ENCODE measurements at regions of chr1 and their contacts with region 1.

Region 1: GRCh38 chr1:117758444-117759316 is 152.8 kb downstream of the TENT5C start:
- DNase-seq: peak; percentile 78
- ATAC-seq: peak; percentile 89
- H3K4me3 Mint-ChIP-seq: peak overlapping the region; percentile 62
- H3K27ac Mint-ChIP-seq: no peak overlapping the region
- H3K4me1 Mint-ChIP-seq: peaks cover 5% of the 10 kb centered on the region
- H3K27me3 Mint-ChIP-seq: peaks cover 12% of the 10 kb centered on the region
- CTCF ChIP-seq: peak; percentile 86

Region 2: GRCh38 chr1:117512743-117513321 is 245.8 kb before region 1 on chr1:
- CTCF ChIA-PET with region 1: interaction called, 46 read pairs
- POLR2A ChIA-PET with region 1: interaction called, 3 read pairs
- intact Hi-C with region 1: loop called (anchors 1 kb)
- DNase-seq: no peak
- ATAC-seq: no peak
- H3K4me3 Mint-ChIP-seq: no peak overlapping the region
- H3K27ac Mint-ChIP-seq: no peak overlapping the region
- H3K4me1 Mint-ChIP-seq: no peaks in the 10 kb centered on the region
- H3K27me3 Mint-ChIP-seq: no peaks in the 10 kb centered on the region
- CTCF ChIP-seq: peak; percentile 65

Region 3: DNA sequence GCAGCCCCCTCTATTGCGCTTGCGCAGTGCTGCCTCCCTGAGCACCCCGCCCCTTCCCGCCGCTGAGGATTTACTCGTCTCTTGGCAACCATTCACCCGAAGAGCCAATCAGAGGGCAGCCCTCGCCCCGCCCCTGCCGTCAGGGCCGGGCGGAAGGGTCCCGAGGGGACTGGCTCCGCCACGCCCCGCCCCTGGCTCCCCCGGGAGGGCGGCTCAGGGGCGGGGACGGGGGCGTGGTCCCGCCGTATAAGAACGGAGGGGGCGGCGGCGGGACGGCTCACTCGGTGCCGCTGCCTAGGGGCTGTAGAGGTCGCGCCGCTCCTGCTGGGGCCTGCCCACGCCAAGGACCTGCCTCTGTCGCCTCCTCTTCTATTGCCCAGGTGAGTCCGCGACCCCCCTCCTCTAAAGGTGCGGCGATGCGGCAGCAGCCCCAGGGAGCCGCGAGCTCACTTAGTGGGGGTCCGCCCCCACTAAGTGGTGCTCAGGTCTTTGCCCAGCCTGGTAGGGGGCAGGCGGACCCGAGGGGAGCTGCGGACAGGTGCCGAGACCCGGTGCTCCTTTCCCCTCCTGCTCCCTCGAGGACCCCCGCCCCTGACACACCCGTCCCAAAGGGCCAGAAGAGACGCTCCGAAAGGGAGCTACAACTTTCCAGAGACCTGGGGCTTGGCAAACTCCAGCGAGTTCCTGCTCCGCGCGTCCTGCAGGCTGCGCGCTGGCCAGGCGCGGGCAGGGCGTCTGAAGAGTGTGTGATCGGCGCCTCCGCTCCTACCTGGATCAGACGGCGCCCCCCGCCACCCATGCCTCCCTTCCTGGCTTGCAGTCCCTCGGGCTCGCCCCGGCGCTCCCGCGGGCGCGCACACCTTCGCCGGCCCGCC is 152.7 kb before region 1 on chr1 and contains the start of gene TENT5C:
- CTCF ChIA-PET with region 1: interaction called, 13 read pairs
- POLR2A ChIA-PET with region 1: no interaction called
- intact Hi-C with region 1: no loop called
- DNase-seq: peak; percentile 98
- ATAC-seq: peak; percentile 96
- H3K4me3 Mint-ChIP-seq: peak within 1 kb of the TSS; percentile 84
- H3K27ac Mint-ChIP-seq: peak within 1 kb of the TSS; percentile 91
- H3K4me1 Mint-ChIP-seq: peaks cover 32% of the 10 kb centered on the region
- H3K27me3 Mint-ChIP-seq: peaks cover 13% of the 10 kb centered on the region
- CTCF ChIP-seq: no peak
- total RNA-seq, gene TENT5C: 13.1 to 13.6 TPM

Region 4: GRCh38 chr1:117683571-117684285 is 75.0 kb before region 1 on chr1:
- CTCF ChIA-PET with region 1: interaction called, 10 read pairs
- POLR2A ChIA-PET with region 1: no interaction called
- intact Hi-C with region 1: no loop called
- DNase-seq: no peak
- ATAC-seq: no peak
- H3K4me3 Mint-ChIP-seq: no peak overlapping the region
- H3K27ac Mint-ChIP-seq: no peak overlapping the region
- H3K4me1 Mint-ChIP-seq: no peaks in the 10 kb centered on the region
- H3K27me3 Mint-ChIP-seq: peaks cover under 1% of the 10 kb centered on the region
- CTCF ChIP-seq: no peak

Region 5: GRCh38 chr1:117735045-117735992 is 23.4 kb before region 1 on chr1:
- CTCF ChIA-PET with region 1: interaction called, 40 read pairs
- POLR2A ChIA-PET with region 1: no interaction called
- intact Hi-C with region 1: no loop called
- DNase-seq: peak; percentile 38
- ATAC-seq: peak; percentile 81
- H3K4me3 Mint-ChIP-seq: peak overlapping the region; percentile 63
- H3K27ac Mint-ChIP-seq: peak overlapping the region; percentile 91
- H3K4me1 Mint-ChIP-seq: peaks cover 14% of the 10 kb centered on the region
- H3K27me3 Mint-ChIP-seq: no peaks in the 10 kb centered on the region
- CTCF ChIP-seq: no peak

Region 6: DNA sequence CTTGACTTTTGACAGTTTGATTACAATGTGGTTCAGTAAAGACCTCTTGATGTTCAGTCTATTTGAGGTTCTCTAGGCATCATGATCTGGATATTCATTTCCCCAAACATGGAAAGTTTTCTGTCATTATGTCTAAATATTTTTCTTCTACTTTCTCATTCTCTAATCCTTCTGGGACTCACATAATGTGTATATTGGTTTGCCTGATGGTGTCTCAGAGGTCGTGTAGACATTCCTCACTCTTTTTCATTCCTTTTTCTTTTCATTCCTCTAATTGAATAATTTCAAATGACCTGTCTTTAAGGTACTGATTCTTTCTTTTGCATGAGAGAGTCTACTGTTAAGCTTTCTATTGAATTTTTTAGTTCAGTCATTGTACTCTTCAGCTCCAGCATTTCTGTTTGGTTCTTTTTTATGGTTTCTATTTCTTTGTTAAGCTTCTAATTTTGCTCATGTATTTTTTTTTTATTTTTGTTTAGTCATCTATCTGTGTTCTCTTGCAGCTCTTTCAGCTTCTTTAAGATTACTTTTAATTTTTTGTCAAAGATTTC is 12.4 kb after region 1 on chr1:
- CTCF ChIA-PET with region 1: interaction called, 18 read pairs
- POLR2A ChIA-PET with region 1: no interaction called
- intact Hi-C with region 1: no loop called
- DNase-seq: no peak
- ATAC-seq: no peak
- H3K4me3 Mint-ChIP-seq: no peak overlapping the region
- H3K27ac Mint-ChIP-seq: no peak overlapping the region
- H3K4me1 Mint-ChIP-seq: no peaks in the 10 kb centered on the region
- H3K27me3 Mint-ChIP-seq: peaks cover 29% of the 10 kb centered on the region
- CTCF ChIP-seq: no peak